ENCODE measurements at regions of chr5 and their contacts with region 1.

Region 1: GRCh38 chr5:149990518-149991376 is 9.7 kb downstream of the TIGD6 start:
- DNase-seq: peak; percentile 86
- H3K4me3 ChIP-seq: no peak overlapping the region
- H3K27ac ChIP-seq: no peak overlapping the region
- H3K4me1 ChIP-seq: no peaks in the 10 kb centered on the region
- H3K27me3 ChIP-seq: no peaks in the 10 kb centered on the region
- CTCF ChIP-seq: peak; percentile 88 to 94 (median 91)
- POLR2A ChIP-seq: no peak

Region 2: DNA sequence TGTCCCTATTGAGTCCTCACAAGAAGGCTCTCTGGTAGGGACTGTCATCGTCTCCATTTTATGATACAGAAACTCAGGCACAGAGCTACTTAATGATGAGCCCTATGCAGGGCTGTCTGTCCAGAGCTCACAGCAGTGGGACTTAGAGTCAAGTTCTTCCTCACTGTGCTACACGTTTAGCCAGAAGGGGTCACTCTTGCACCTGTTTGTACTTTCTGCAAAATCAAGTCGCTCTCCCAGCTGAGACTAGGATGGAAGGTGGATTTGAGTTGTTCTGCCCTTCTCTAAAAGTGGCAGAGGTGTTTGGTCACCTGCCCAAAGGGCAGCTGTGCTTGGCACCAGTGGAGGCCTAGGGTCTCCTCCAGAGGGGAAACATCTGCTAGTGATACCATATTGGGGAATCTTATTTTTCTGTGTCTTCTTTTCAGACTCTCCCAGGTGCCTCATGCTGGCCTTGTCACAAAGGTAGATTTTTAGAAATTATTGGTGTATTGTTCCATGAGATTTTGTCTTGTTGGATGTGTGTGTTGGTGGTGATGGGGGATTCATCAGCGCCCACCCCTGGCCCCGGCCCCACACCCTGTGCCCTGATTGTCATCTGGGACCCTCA is 156.4 kb before region 1 on chr5:
- intact Hi-C with region 1: loop called (anchors 10 kb)
- DNase-seq: peak; percentile 90
- H3K4me3 ChIP-seq: no peak overlapping the region
- H3K27ac ChIP-seq: no peak overlapping the region
- H3K4me1 ChIP-seq: no peaks in the 10 kb centered on the region
- H3K27me3 ChIP-seq: no peaks in the 10 kb centered on the region
- CTCF ChIP-seq: peak; percentile 49 to 74 (median 58)
- POLR2A ChIP-seq: no peak

Measured in testis (tissue), 5 donors.